OCI-LY7 (cell line): ENCODE measurements at regions of chr21 and their contacts with region 1.

Region 1: DNA sequence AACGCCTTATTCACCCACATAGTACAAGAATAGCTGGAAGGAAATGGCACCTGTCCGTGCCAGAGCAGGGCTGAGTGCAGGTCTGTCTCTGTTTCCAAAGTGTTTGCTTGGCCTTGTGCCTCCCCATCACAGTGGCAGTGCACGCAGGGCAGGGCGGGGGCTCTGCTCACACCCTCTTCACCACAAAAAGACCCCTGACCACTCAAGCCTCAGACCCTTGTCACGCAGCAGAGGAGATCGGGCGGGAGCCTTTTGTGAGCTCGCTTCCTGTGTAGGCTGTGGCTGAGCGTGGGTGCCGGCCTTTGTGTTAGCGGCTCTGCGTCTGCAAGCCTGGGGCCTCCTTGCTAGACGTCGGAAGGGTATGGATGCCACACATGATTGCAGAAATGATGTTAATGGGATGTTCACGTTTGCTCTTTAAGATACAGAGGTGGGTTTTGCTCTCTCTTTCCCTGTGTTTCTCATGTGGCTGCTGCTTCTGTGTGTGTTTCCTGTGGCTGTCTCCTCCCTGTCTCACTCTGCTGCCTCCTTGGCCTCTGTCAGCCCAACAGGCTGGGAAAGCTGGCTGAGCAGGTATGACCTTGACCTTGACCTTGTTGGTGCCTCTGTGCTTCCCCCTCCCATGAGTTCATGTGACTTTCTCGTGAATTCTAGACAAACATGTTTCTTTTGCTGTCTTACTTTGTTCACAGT is 45.4 kb downstream of the S100B start:
- DNase-seq: peak; percentile 71
- H3K4me3 ChIP-seq: peak overlapping the region; percentile 52
- H3K27ac ChIP-seq: peak overlapping the region; percentile 78
- H3K4me1 ChIP-seq: peaks cover 29% of the 10 kb centered on the region
- CTCF ChIP-seq: no peak

Region 2: DNA sequence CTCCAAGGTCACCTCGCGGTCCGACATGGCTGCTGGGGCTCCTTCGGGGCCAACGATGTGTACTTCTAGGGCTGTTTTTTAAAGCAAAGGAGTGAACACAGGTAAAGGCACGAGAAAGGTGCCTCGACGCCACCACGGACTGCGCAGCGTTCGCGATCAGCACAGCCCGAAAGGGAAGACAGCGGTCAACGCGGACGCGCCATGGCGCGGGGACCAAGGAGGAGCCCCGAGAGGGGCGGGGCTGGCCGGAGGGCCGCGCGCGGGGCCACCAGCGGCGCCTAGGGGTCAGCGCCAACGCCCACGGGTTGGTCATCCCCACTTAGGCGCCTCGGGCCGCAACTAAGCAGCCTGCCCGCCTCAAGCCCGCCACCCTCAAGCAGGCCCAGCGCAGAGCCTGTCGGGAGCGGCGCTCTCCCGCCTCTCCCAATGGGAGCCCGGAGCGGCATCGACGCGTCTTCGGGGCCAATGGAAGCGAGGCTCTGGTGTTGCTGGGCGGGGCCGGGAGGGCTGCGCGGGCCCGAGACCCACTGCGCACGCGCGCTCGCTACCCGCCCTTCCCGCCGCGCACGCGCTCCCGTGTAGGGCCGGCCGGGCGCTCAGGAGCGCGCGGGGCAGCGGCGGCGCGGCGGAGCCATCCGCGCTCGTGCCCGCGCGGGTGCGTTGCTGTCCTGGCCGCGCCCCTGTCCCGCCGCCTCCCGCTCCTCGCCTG is 101.0 kb before region 1 on chr21 and contains the start of gene DIP2A:
- CTCF ChIA-PET with region 1: no interaction called
- POLR2A ChIA-PET with region 1: no interaction called
- intact Hi-C with region 1: loop called (anchors 5 kb)
- DNase-seq: peak; percentile 98
- H3K4me3 ChIP-seq: peak within 1 kb of the TSS; percentile 89
- H3K27ac ChIP-seq: peak within 1 kb of the TSS; percentile 66
- H3K4me1 ChIP-seq: peaks cover 19% of the 10 kb centered on the region
- CTCF ChIP-seq: no peak
- total RNA-seq, gene DIP2A: 27.9 and 30.2 TPM in 2 replicates

Region 3: DNA sequence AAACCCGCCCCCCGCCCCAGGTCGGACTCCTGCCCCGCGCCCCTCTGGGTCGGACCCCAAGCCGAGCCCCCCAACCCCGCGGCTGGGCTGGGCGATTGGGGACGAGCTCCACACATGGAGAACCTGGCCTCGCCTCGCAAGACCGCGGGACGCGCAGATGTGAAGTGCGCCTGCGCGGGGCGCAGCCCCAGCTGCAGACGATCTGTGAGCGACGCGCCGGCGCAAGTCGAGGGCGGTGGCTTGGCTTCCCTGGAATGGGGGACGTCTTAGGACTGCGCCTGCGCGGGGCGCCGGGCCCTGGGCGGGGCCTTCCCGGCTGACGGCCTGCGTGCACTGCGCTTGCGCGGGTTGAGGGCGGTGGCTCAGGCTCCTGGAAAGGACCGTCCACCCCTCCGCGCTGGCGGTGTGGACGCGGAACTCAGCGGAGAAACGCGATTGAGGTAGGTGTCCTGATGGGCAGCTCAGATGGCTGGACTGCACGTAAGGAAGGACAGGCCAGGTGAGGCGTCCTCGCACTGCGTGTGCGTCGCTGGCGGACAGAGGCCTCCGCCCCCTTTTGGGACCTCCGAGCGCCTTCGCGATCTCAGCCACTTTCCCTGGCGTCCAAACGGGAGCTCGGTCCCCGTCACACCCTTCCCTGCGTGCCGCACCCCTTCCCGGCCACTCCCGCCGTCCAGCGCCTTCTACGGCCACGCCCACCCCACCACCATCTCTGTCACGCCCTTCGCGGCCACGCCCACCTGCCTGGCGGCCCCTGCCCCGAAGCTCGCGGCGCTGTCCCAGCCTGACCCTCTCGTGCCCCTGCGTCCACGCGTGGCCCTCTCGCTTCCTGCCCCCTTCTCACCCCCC is 76.1 kb after region 1 on chr21 and contains the start of gene PRMT2:
- CTCF ChIA-PET with region 1: no interaction called
- POLR2A ChIA-PET with region 1: interaction called, 11 read pairs
- intact Hi-C with region 1: no loop called
- DNase-seq: peak; percentile 97
- H3K4me3 ChIP-seq: peak within 1 kb of the TSS; percentile 79
- H3K27ac ChIP-seq: peak within 1 kb of the TSS; percentile 70
- H3K4me1 ChIP-seq: peaks cover 20% of the 10 kb centered on the region
- CTCF ChIP-seq: peak; percentile 25; the same call in 1 of the 2 replicates
- total RNA-seq, gene PRMT2: 30.5 and 46.4 TPM in 2 replicates